Activated CD8-positive, alpha-beta memory T cell treated with anti-CD3 and anti-CD28 coated beads, Interleukin-2, amount 10 ng/mL, durations not matched to agents 7 days and 5 days (primary cell): ENCODE measurements at regions of chr15 and their contacts with region 1.

Region 1: GRCh38 chr15:73964736-73965093 is 27.4 kb downstream of the STOML1 start:
- DNase-seq: peak; percentile 92
- ATAC-seq: peak; percentile 94
- H3K4me3 Mint-ChIP-seq: peak overlapping the region; percentile 65
- H3K27ac Mint-ChIP-seq: peak overlapping the region; percentile 81
- H3K4me1 Mint-ChIP-seq: peaks cover 39% of the 10 kb centered on the region
- H3K27me3 Mint-ChIP-seq: peaks cover 7% of the 10 kb centered on the region

Region 2: GRCh38 chr15:73832657-73833056 is 132.1 kb before region 1 on chr15:
- CTCF ChIA-PET with region 1: no interaction called
- DNase-seq: no peak
- ATAC-seq: no peak
- H3K4me3 Mint-ChIP-seq: no peak overlapping the region
- H3K27ac Mint-ChIP-seq: no peak overlapping the region
- H3K4me1 Mint-ChIP-seq: no peaks in the 10 kb centered on the region
- H3K27me3 Mint-ChIP-seq: peaks cover 46% of the 10 kb centered on the region

Region 3: DNA sequence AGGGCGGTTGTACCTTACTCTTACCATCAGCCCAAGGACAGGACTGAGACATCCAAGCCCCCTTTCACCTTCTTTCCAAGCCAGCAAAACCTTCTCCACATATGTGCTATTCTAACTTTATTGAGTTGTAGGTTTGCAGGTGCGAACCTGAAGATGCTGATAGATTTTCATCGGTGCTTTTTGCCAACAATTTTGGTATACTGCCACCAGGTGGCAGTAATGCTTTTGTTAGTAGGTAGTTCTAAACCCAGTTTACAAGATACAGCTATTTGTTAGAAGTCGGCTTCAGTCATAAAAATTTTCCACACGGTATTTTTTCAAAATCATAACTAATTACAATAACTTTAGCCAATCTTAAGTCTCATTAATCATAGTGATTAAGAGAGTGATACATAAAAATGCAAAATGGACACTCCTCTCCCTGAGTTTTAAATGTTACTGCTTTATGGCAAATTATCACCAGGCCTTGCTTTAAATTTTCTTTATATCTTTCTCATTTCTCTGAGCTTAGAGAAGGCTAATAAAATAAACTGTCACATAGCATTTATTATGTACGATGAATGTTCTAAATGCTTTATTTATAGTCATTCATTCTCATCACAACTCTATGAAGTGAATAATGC is 90.7 kb before region 1 on chr15:
- CTCF ChIA-PET with region 1: interaction called, 32 read pairs
- DNase-seq: peak; percentile 57
- ATAC-seq: peak; percentile 57
- H3K4me3 Mint-ChIP-seq: no peak overlapping the region
- H3K27ac Mint-ChIP-seq: no peak overlapping the region
- H3K4me1 Mint-ChIP-seq: peaks cover 10% of the 10 kb centered on the region
- H3K27me3 Mint-ChIP-seq: peaks cover 53% of the 10 kb centered on the region

Region 4: DNA sequence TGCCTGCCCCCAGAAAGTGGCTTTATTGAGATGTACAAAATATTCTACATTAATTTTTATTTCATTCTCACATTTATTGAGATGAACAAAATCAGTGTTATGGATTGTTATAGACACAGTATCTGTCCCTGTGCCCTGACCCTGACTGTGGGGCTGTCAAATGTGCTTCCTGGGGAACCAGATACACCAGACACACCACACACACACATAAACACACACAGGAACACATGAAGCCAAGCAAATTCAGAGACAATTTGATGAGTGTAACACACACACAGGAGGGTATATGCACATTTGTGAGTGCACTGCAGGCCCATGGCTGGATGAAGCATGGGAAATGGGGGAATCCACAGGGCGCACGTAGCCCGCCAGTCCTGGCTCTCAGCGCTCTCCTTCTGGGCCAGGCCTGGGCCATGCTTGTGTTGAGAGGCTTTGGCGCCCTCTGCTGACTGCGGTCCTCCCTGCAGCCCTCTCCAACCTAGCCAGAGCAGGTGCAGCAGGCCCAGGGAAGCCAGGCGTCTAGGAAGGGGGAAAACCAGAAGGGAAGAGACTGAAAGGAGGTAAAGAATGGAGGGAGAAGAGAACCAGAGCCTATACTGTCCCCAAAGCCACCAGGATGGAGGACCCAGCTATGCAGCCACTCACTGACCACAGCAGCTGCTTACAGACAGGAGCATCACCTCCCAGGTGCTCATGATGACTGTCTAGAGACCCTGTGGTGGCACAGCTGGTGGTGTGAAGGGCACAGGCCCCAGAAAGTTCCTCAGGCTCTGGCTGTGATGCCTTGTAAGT is 56.5 kb before region 1 on chr15:
- CTCF ChIA-PET with region 1: interaction called, 17 read pairs
- DNase-seq: peak; percentile 86
- ATAC-seq: peak; percentile 98
- H3K4me3 Mint-ChIP-seq: no peak overlapping the region
- H3K27ac Mint-ChIP-seq: no peak overlapping the region
- H3K4me1 Mint-ChIP-seq: peaks cover 27% of the 10 kb centered on the region
- H3K27me3 Mint-ChIP-seq: no peaks in the 10 kb centered on the region

Region 5: GRCh38 chr15:73936181-73936580 is 28.5 kb before region 1 on chr15:
- CTCF ChIA-PET with region 1: interaction called, 18 read pairs
- DNase-seq: no peak
- ATAC-seq: no peak
- H3K4me3 Mint-ChIP-seq: no peak overlapping the region
- H3K27ac Mint-ChIP-seq: no peak overlapping the region
- H3K4me1 Mint-ChIP-seq: peaks cover 16% of the 10 kb centered on the region
- H3K27me3 Mint-ChIP-seq: no peaks in the 10 kb centered on the region

Region 6: GRCh38 chr15:73950831-73951561 is 13.7 kb before region 1 on chr15:
- CTCF ChIA-PET with region 1: interaction called, 175 read pairs
- DNase-seq: peak; percentile 85
- ATAC-seq: peak; percentile 97
- H3K4me3 Mint-ChIP-seq: no peak overlapping the region
- H3K27ac Mint-ChIP-seq: peak overlapping the region; percentile 83
- H3K4me1 Mint-ChIP-seq: peaks cover 13% of the 10 kb centered on the region
- H3K27me3 Mint-ChIP-seq: no peaks in the 10 kb centered on the region

Region 7: DNA sequence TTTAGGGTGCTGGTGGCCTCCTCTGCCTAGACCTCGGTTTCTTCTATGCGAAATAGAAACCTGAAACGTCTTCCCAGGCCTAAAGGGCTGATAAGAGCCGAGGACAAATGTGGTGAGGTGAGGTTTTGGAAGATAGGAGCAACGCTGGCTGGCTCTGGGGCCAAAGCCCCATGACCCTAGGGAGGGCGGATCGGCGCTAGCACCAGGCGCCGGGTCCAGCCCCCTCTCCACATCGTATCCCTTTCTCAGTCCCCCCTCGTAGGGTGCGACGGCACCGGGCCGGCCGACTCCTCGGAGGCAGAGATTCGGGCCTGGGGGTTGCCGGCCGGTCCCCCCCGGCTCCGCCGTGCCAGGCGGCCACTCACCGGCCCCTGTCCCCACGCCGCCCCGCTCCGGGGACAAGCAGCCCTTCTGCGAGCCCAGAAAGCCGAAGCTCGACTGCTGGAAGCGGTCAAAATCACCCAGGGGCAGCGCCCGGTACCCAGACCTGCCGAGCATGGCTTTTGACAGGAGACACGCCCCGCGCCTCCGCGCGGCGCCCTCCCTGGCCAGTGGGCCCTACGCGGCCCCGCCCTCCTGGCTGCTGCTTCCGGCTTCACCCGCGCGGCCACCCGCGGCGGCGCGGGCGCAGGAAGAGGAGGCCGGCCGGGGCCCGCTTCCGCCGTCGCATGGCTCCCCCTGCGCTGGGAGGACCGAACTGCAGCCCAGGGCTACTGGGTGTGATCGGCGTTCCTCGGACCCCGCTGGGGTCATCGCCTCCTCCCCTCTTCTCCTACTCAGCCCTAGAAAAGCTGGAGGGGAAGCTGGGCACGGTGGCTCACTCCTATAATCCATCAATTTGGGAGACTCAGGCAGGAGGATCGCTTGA is 27.2 kb after region 1 on chr15 and contains the start of gene STOML1:
- CTCF ChIA-PET with region 1: interaction called, 147 read pairs
- DNase-seq: peak; percentile 95
- ATAC-seq: peak; percentile 82
- H3K4me3 Mint-ChIP-seq: peak within 1 kb of the TSS; percentile 73
- H3K27ac Mint-ChIP-seq: peak within 1 kb of the TSS; percentile 83
- H3K4me1 Mint-ChIP-seq: peaks cover 38% of the 10 kb centered on the region
- H3K27me3 Mint-ChIP-seq: no peaks in the 10 kb centered on the region
- total RNA-seq, gene STOML1: 7.9 to 8.6 TPM

Region 8: DNA sequence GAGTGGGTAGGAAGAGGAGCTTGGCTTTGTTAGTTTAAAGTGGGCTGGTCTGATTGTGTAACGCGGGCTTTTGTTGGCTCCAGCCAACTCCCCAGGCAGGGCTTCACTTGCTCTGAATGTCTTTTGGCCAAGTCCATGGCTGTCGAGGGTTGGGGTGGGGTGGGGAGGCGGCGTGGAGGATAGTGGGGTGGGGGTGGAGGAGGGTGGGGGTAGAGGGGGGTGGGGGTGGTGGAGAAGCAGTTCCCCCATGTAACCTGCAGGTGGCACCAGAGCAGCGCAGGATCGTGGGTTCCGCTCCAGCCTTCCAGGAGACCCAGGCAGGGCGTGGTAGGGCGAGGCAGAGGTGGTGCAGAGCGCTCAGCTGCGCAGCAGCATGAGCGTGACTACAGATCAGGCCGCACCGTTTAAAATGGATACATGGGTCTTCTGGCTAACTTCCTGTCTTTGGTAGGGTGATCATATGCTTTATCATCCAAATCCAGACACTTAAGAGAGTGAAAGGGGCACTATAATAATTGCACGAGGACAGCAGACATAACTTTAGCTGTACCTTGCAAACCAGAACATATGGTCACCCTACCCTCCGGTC is 89.3 kb after region 1 on chr15:
- CTCF ChIA-PET with region 1: interaction called, 174 read pairs
- DNase-seq: peak; percentile 84
- ATAC-seq: peak; percentile 98
- H3K4me3 Mint-ChIP-seq: no peak overlapping the region
- H3K27ac Mint-ChIP-seq: no peak overlapping the region
- H3K4me1 Mint-ChIP-seq: peaks cover 11% of the 10 kb centered on the region
- H3K27me3 Mint-ChIP-seq: peaks cover 3% of the 10 kb centered on the region